A673 (cell line): ENCODE measurements at regions of chr18 and their contacts with region 1.

Region 1: GRCh38 chr18:61502472-61502871 is 169.2 kb downstream of the CDH20 start:
- DNase-seq: peak; percentile 72
- H3K4me3 ChIP-seq: no peak overlapping the region
- H3K27ac ChIP-seq: no peak overlapping the region
- H3K4me1 ChIP-seq: no peaks in the 10 kb centered on the region
- H3K27me3 ChIP-seq: peaks cover 29% of the 10 kb centered on the region
- CTCF ChIP-seq: peak; percentile 70

Region 2: DNA sequence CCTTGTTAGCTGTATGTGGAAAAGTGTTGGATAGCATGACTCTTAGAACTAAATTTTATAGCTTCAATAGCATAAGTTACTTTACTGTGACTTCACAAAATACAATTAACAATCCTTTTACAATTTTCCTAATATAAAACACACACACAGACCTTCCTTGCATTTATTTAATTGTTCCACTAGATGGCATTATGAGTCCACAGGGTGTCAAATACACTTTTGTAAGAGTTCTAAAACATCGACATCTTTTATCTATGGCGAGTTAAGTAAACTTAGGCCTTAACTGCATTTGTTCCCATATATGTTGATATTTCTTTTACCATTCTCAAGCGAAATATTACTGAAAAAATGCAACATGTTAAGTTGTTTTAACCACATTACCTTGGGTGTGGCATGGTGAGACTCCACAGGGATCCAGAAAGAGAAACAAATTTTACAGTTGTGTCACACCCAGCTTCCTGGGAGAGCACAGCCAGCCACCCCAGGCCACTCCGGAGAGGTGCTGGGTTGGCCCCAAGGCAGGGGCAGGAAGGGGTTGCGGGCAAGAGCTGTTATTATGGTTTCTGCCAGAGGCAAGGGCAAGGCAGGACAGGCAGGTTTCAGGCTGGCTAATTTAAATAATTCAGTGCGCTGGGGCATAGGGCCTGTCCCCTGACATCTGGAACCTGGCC is 817.5 kb before region 1 on chr18:
- CTCF ChIA-PET with region 1: no interaction called
- POLR2A ChIA-PET with region 1: no interaction called
- intact Hi-C with region 1: loop called (anchors 5 kb)
- DNase-seq: peak; percentile 40
- H3K4me3 ChIP-seq: no peak overlapping the region
- H3K27ac ChIP-seq: no peak overlapping the region
- H3K4me1 ChIP-seq: no peaks in the 10 kb centered on the region
- H3K27me3 ChIP-seq: peaks cover 3% of the 10 kb centered on the region
- CTCF ChIP-seq: peak; percentile 69

Region 3: GRCh38 chr18:60809937-60810336 is 692.5 kb before region 1 on chr18:
- CTCF ChIA-PET with region 1: interaction called, 4 read pairs
- POLR2A ChIA-PET with region 1: no interaction called
- intact Hi-C with region 1: loop called (anchors 5 kb)
- DNase-seq: no peak
- H3K4me3 ChIP-seq: no peak overlapping the region
- H3K27ac ChIP-seq: no peak overlapping the region
- H3K4me1 ChIP-seq: no peaks in the 10 kb centered on the region
- H3K27me3 ChIP-seq: no peaks in the 10 kb centered on the region
- CTCF ChIP-seq: no peak

Region 4: GRCh38 chr18:61272793-61273192 is 229.7 kb before region 1 on chr18:
- CTCF ChIA-PET with region 1: interaction called, 10 read pairs
- POLR2A ChIA-PET with region 1: no interaction called
- intact Hi-C with region 1: no loop called
- DNase-seq: no peak
- H3K4me3 ChIP-seq: no peak overlapping the region
- H3K27ac ChIP-seq: no peak overlapping the region
- H3K4me1 ChIP-seq: no peaks in the 10 kb centered on the region
- H3K27me3 ChIP-seq: peaks cover 7% of the 10 kb centered on the region
- CTCF ChIP-seq: no peak

Region 5: DNA sequence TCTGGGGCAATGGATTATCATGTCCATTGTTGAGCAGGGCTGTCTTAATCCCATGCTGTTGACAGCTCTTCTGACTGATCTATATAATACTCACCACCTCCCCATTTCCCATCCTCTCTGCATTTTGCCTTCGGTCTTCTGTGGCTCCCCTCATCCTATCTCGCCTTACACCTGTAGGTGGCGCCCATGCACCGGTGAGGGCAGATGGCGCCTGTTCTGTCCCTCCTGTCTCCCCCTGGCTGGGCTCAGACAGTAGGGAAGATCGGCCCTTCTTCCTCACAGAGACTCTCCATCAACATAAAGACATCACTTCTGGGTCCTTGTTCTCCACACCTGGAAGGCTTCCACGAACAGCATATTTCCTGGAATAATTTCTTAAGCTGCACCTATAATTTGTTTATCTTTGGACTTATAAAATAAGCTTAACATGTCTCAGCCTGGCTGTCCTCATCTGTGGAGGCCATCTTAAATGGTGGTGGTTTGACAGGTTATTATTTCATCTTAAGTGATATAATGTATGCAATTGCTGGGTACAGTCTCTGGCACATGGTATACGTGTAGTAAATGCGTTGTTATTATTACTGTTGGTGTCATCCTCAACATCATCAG is 180.1 kb before region 1 on chr18:
- CTCF ChIA-PET with region 1: interaction called, 7 read pairs
- POLR2A ChIA-PET with region 1: no interaction called
- intact Hi-C with region 1: loop called (anchors 1 kb)
- DNase-seq: peak; percentile 77
- H3K4me3 ChIP-seq: no peak overlapping the region
- H3K27ac ChIP-seq: no peak overlapping the region
- H3K4me1 ChIP-seq: no peaks in the 10 kb centered on the region
- H3K27me3 ChIP-seq: peaks cover 42% of the 10 kb centered on the region
- CTCF ChIP-seq: peak; percentile 92

Region 6: DNA sequence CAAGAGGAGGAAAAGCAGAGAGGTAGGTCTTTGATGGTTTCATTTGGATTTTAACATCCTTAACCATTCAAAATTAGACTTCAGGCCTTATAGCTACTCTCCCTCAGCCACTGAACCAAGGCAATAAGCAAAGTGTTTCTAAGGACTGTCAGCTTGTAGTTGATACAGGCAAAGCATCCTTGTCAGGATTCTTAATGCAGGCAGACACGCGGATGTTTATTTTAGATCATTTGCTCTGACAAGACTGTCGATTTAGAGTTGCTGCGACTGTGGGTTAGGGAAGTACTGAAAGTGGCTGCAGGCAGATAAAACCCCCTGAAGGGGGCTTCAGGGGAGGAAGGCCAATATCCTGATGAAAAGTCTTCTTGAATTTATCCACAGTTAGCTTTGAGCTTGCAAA is 122.6 kb before region 1 on chr18:
- CTCF ChIA-PET with region 1: no interaction called
- POLR2A ChIA-PET with region 1: no interaction called
- intact Hi-C with region 1: no loop called
- DNase-seq: no peak
- H3K4me3 ChIP-seq: no peak overlapping the region
- H3K27ac ChIP-seq: no peak overlapping the region
- H3K4me1 ChIP-seq: no peaks in the 10 kb centered on the region
- H3K27me3 ChIP-seq: peaks cover 28% of the 10 kb centered on the region
- CTCF ChIP-seq: no peak